Caco-2 (cell line): ENCODE measurements at regions of chr2 and their contacts with region 1.

Region 1: GRCh38 chr2:38377050-38377828 is at the start of gene ATL2:
- DNase-seq: peak; percentile 96 to 98
- H3K4me3 ChIP-seq: peak within 1 kb of the TSS; percentile 48
- H3K4me3 Mint-ChIP-seq: peak within 1 kb of the TSS; percentile 80
- H3K27ac Mint-ChIP-seq: peak within 1 kb of the TSS; percentile 94
- H3K4me1 ChIP-seq: peaks cover 21% of the 10 kb centered on the region
- H3K4me1 Mint-ChIP-seq: peaks cover 35% of the 10 kb centered on the region
- H3K27me3 ChIP-seq: no peaks in the 10 kb centered on the region
- H3K27me3 Mint-ChIP-seq: no peaks in the 10 kb centered on the region
- CTCF ChIP-seq: no peak
- total RNA-seq, gene ATL2: 107 and 113 TPM in 2 replicates

Region 2: GRCh38 chr2:38284971-38285370 is 92.3 kb before region 1 on chr2:
- CTCF ChIA-PET with region 1: no interaction called
- POLR2A ChIA-PET with region 1: no interaction called
- intact Hi-C with region 1: loop called (anchors 5 kb)
- DNase-seq: peak; percentile 87 to 91
- H3K4me3 ChIP-seq: no peak overlapping the region
- H3K4me3 Mint-ChIP-seq: peak overlapping the region; percentile 36
- H3K27ac Mint-ChIP-seq: peak overlapping the region; percentile 92
- H3K4me1 ChIP-seq: peaks cover 67% of the 10 kb centered on the region
- H3K4me1 Mint-ChIP-seq: peaks cover 57% of the 10 kb centered on the region
- H3K27me3 ChIP-seq: no peaks in the 10 kb centered on the region
- H3K27me3 Mint-ChIP-seq: no peaks in the 10 kb centered on the region
- CTCF ChIP-seq: no peak

Region 3: GRCh38 chr2:38315707-38316333 is 61.4 kb before region 1 on chr2:
- CTCF ChIA-PET with region 1: interaction called, 10 read pairs
- POLR2A ChIA-PET with region 1: no interaction called
- intact Hi-C with region 1: loop called (anchors 2 kb)
- DNase-seq: peak in 1 of 2 experiments; percentile 66
- H3K4me3 ChIP-seq: no peak overlapping the region
- H3K4me3 Mint-ChIP-seq: no peak overlapping the region
- H3K27ac Mint-ChIP-seq: no peak overlapping the region
- H3K4me1 ChIP-seq: no peaks in the 10 kb centered on the region
- H3K4me1 Mint-ChIP-seq: no peaks in the 10 kb centered on the region
- H3K27me3 ChIP-seq: no peaks in the 10 kb centered on the region
- H3K27me3 Mint-ChIP-seq: no peaks in the 10 kb centered on the region
- CTCF ChIP-seq: peak; percentile 53 to 60

Region 4: GRCh38 chr2:38409156-38410122 is 32.2 kb after region 1 on chr2:
- CTCF ChIA-PET with region 1: no interaction called
- POLR2A ChIA-PET with region 1: interaction called, 12 read pairs
- intact Hi-C with region 1: no loop called
- DNase-seq: no peak
- H3K4me3 ChIP-seq: no peak overlapping the region
- H3K4me3 Mint-ChIP-seq: no peak overlapping the region
- H3K27ac Mint-ChIP-seq: no peak overlapping the region
- H3K4me1 ChIP-seq: peaks cover 9% of the 10 kb centered on the region; the same call in 1 of the 2 replicates
- H3K4me1 Mint-ChIP-seq: no peaks in the 10 kb centered on the region
- H3K27me3 ChIP-seq: no peaks in the 10 kb centered on the region
- H3K27me3 Mint-ChIP-seq: no peaks in the 10 kb centered on the region
- CTCF ChIP-seq: no peak

Region 5: DNA sequence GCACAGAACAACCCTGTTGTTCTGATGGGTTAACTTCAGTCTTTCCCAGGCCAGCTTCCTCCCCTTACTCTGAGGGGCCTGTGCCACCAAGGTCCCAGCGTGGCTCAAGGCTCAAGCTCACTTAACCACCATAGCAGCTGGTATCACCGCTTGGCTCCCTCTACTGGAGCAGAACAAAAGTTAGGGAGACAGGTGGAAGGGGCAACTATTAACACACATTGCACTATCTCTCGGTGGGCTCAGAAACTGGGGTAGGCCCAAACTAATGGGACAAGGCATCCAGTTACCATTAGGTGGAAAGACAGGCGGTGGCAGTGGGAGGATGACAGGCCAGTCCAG is 88.5 kb after region 1 on chr2:
- CTCF ChIA-PET with region 1: interaction called, 5 read pairs
- POLR2A ChIA-PET with region 1: no interaction called
- intact Hi-C with region 1: loop called (anchors 2 kb)
- DNase-seq: peak; percentile 42 to 48
- H3K4me3 ChIP-seq: no peak overlapping the region
- H3K4me3 Mint-ChIP-seq: no peak overlapping the region
- H3K27ac Mint-ChIP-seq: no peak overlapping the region
- H3K4me1 ChIP-seq: no peaks in the 10 kb centered on the region; the same call in 1 of the 2 replicates
- H3K4me1 Mint-ChIP-seq: no peaks in the 10 kb centered on the region
- H3K27me3 ChIP-seq: no peaks in the 10 kb centered on the region
- H3K27me3 Mint-ChIP-seq: no peaks in the 10 kb centered on the region
- CTCF ChIP-seq: peak; percentile 38 to 69

Region 6: GRCh38 chr2:38508311-38509039 is 131.2 kb after region 1 on chr2:
- CTCF ChIA-PET with region 1: interaction called, 16 read pairs
- POLR2A ChIA-PET with region 1: interaction called, 3 read pairs
- intact Hi-C with region 1: loop called (anchors 2 kb)
- DNase-seq: peak; percentile 88 to 89
- H3K4me3 ChIP-seq: no peak overlapping the region
- H3K4me3 Mint-ChIP-seq: no peak overlapping the region
- H3K27ac Mint-ChIP-seq: no peak overlapping the region
- H3K4me1 ChIP-seq: no peaks in the 10 kb centered on the region
- H3K4me1 Mint-ChIP-seq: no peaks in the 10 kb centered on the region
- H3K27me3 ChIP-seq: no peaks in the 10 kb centered on the region
- H3K27me3 Mint-ChIP-seq: no peaks in the 10 kb centered on the region
- CTCF ChIP-seq: peak; percentile 81 to 93